ENCODE measurements at regions of chr4 and their contacts with region 1.

Region 1: DNA sequence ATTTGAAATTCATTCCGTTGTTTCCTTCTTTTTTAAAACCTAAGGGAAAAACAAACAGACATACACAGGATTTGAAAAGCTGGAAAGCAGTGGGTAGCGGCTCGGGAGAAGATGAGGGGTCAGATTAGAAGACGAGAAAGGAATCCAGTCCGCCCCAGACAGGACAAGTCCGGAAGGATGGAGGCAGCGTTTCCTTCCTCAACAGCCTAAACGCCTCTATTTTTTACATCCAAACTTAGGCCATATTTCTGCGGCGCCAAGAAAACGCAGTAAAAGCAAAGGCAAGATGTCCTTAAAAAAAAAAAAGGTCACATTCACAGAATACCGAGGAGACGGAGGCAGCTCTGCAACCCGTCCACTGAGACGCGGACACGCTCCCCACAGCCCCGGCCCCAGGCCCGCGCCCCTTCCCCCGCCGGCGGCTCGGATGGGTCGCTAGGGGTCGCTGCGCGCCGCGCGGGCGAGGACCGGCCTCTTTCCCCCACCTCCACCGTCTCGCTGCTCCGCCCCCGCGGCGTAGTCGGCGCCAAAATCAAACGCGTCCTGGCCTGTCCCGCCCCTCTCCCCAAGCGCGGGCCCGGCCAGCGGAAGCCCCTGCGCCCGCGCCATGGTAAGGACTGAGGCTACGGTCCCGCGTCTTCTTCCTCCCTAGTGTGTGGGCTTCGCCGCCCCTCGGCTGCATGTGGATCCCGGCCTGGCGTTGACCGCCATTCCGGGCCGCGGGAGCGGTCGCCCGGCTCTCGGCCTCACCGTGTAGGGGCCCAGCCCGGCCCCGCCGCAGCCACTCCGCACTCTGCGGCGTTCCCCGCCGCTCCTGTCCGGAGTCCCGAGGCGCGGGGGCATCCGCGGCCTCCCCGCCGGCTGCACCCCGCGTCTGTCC is at the start of gene MND1:
- DNase-seq: peak; percentile 38 to 88
- H3K4me3 ChIP-seq: peak within 1 kb of the TSS; percentile 92
- H3K27ac ChIP-seq: peak within 1 kb of the TSS; percentile 70
- H3K4me1 ChIP-seq: peaks cover 34% of the 10 kb centered on the region
- H3K27me3 ChIP-seq: no peaks in the 10 kb centered on the region
- CTCF ChIP-seq: peak; percentile 82
- total RNA-seq, gene MND1: 17.6 and 24.4 TPM in 2 replicates

Region 2: DNA sequence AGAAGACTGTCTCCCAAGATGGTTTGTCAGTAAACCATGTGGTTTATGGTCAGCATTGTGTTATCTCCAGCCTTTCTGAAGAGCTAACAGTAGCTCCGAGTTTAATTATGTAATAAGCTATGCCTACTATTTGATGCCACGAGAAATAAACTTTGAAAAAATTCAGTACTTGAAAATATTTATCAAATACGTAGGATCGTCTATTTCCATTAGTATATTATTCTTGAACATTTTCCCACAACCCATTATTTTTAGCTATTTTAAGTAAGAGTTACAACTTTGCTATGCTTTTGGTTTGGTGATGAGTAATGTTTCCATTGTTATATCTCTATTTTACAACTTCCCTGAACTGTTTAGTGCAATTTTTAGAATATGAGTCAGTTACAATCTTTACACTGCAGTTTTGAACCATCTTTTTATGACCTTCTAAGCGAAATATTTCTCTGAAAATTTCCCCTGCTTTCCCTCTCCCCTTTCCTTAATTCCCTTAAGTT is 184.6 kb before region 1 on chr4:
- CTCF ChIA-PET with region 1: interaction called, 10 read pairs
- POLR2A ChIA-PET with region 1: no interaction called
- intact Hi-C with region 1: no loop called
- DNase-seq: no peak
- H3K4me3 ChIP-seq: no peak overlapping the region
- H3K27ac ChIP-seq: no peak overlapping the region
- H3K4me1 ChIP-seq: 0 out of 2 replicates have a peak, but pooled peaks cover 8% of the 10 kb centered on the region
- H3K27me3 ChIP-seq: no peaks in the 10 kb centered on the region
- CTCF ChIP-seq: no peak

Region 3: DNA sequence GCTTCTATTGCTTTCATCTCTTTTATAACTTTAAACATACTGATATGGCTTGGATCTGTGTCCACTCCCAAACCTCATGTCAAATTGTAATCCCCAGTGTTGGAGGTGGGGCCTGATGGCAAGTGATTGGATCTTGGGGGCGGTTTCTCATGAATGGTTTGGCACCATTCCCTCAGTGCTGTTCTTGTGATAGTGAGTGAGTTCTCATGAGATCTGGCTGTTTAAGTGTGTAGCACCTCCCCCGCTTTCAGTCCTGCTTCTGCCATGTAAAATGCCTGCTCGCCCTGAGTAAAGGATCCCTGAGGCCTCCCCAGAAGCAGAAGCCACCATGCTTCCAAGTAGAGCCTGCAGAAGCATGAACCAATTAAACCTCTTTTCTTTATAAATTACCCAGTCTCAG is 17.8 kb after region 1 on chr4:
- CTCF ChIA-PET with region 1: no interaction called
- POLR2A ChIA-PET with region 1: no interaction called
- intact Hi-C with region 1: no loop called
- DNase-seq: no peak
- H3K4me3 ChIP-seq: no peak overlapping the region
- H3K27ac ChIP-seq: no peak overlapping the region
- H3K4me1 ChIP-seq: no peaks in the 10 kb centered on the region
- H3K27me3 ChIP-seq: no peaks in the 10 kb centered on the region
- CTCF ChIP-seq: no peak

Region 4: DNA sequence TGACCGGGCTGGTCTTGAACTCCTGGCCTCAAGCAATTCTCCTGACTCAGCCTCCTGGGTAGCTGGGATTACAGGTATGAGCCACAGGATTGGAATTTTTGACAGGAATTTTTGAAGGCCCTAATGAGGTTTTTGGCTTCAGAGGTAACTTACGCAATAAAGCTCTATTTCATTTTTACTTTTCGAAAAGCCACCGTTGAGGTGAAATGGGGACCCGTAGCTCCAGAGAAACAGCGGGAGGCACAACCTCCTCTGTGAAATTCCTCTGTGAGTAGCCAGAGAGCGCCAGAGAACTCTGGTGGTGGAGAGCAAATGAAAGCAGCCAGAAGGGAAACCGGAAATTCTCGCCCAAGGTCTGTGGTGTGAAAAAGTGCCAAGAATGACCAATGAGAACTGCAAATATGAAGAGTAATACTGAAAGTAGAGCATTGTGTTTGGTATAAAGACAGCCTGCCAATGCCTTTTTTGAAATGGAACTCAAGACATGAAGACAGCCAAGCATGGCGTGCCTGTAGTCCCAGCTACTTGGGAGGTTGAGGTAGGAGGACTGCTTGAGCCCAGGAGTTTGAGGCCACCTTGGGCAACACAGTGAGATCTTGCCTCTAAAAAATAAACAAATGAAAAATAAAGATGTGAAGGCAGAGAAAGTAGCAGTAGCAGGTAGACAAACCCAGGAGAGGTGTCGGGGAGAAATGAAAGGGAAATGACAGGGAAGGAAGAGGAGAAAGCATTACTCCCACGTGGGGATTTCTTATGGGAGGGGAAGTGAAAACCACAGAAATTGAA is 88.8 kb after region 1 on chr4:
- CTCF ChIA-PET with region 1: interaction called, 3 read pairs
- POLR2A ChIA-PET with region 1: no interaction called
- intact Hi-C with region 1: loop called (anchors 2 kb)
- DNase-seq: peak; percentile 72 to 87
- H3K4me3 ChIP-seq: no peak overlapping the region
- H3K27ac ChIP-seq: peak overlapping the region; percentile 61; the same call in 1 of the 2 replicates
- H3K4me1 ChIP-seq: 0 out of 2 replicates have a peak, but pooled peaks cover 8% of the 10 kb centered on the region
- H3K27me3 ChIP-seq: no peaks in the 10 kb centered on the region
- CTCF ChIP-seq: peak; percentile 70

Region 5: DNA sequence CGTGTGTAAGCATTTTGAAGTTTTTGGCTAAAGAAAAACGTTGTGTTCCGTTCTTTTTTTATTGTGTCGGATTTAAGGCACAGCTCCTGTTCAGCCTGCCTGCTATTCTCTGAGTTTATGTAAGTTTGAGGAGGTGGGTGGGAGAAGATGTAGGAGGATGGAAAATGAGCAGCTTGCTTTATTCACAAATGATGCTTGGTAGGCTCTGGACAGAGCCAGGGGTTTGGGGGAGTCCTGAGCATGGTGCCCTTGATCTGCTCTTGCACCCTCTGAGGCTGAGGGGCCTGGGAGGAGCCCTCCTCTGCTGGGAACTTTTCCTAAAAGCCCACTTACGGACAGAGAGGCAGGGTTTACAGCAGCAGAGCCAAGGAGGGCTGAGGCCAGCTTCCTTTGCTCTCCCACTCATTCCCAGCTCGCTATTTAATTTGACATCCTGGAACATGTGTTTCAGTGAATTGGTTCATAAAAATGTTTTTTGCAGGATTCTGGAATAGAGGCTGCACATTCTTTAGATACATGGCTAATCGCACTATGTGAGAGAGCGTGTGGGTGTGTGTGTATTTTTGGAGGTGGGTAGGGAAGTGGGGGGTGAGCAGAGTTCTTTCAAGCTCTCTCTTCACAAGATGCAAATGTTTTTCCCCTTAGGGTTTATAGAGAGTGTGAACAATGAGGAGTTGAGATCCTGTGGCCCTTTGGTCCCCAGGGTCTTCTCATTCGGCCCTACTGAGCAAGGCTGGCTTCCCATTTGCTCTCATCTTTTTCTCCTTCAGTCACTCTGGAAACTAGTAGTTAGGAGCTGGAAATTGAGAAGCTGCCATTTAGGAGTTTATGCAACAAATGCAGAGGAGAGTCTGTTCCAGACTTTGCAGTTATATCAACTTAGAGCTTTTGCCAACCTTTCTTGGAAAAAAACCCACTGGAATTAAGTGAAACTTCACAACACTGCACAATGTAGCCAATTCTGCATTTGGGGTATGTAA is 153.9 kb after region 1 on chr4:
- CTCF ChIA-PET with region 1: no interaction called
- POLR2A ChIA-PET with region 1: no interaction called
- intact Hi-C with region 1: no loop called
- DNase-seq: no peak
- H3K4me3 ChIP-seq: no peak overlapping the region
- H3K27ac ChIP-seq: peak overlapping the region; percentile 66
- H3K4me1 ChIP-seq: peaks cover 36% of the 10 kb centered on the region
- H3K27me3 ChIP-seq: no peaks in the 10 kb centered on the region
- CTCF ChIP-seq: no peak

Region 6: DNA sequence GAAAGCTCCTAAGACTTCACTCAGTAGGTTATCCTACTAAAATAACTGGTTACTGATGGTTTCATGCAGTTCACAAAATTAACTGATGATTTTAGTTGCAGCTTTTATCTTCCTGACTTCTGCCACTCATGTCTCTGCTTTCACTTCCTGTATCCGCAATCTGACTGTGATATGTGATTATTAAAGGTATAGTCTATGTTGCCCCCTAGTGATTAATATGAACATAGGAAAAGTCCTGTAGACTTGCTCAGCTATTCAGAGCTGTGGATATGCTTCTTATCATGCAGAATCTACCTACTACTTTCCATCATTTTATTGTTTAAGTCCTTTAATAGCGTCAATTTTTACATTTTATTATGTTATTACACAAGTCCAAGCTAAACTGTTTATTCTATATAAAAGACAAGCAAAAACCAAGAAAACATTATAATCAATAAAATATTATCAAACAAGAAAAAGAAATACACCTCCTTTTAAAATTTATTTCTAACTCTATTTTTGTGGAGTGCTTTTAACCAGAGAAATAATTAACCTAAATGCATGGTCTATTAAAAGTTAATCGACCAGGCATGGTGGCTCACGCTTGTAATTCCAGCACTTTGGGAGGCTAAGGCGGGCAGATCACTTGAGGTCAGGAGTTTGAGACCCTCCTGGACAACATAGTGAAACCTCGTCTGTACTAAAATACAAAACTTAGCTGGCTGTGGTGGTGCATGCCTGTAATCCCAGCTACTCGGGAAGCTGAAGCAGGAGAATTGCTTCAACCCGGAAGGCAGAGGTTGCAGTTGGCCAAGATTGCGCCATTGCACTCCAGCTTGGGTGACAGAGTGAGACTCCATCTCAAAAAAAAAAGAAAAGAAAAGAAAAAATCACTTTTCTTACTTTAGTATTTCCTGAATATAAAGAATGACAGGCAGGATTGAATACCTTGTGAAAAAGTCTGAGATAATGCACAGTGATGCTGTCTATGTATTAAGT is 299.3 kb after region 1 on chr4:
- CTCF ChIA-PET with region 1: interaction called, 3 read pairs
- POLR2A ChIA-PET with region 1: no interaction called
- intact Hi-C with region 1: loop called (anchors 10 kb)
- DNase-seq: peak in 1 of 2 experiments; percentile 47
- H3K4me3 ChIP-seq: no peak overlapping the region
- H3K27ac ChIP-seq: no peak overlapping the region
- H3K4me1 ChIP-seq: no peaks in the 10 kb centered on the region
- H3K27me3 ChIP-seq: no peaks in the 10 kb centered on the region
- CTCF ChIP-seq: peak; percentile 56; the same call in 1 of the 2 replicates

Region 7: GRCh38 chr4:153750197-153750817 is 405.9 kb after region 1 on chr4:
- CTCF ChIA-PET with region 1: no interaction called
- POLR2A ChIA-PET with region 1: no interaction called
- intact Hi-C with region 1: loop called (anchors 1 kb)
- DNase-seq: peak; percentile 49 to 53
- H3K4me3 ChIP-seq: no peak overlapping the region
- H3K27ac ChIP-seq: no peak overlapping the region
- H3K4me1 ChIP-seq: no peaks in the 10 kb centered on the region
- H3K27me3 ChIP-seq: no peaks in the 10 kb centered on the region
- CTCF ChIP-seq: peak; percentile 78